PC-9 (cell line): ENCODE measurements at regions of chr12 and their contacts with region 1.

Region 1: DNA sequence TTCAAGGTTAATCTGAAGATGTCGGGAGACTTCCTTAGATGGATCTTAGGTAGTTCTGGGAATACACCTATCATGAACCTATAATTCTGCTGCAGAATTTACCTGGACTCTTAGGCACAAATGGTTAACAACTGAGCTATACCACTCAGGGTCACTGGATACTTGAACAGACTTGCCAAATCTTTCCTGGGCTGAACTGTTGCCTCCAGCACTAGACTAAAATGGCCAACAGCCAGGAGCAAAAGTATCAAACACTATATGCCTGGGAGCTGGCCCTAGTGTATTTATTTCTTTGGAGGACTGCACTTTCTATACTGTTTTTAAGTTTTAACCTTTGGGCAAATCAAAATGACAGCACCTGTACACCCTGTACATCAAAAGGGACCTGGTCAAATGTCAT is 252.8 kb downstream of the TMEM117 start:
- DNase-seq: no peak
- H3K4me3 ChIP-seq: no peak overlapping the region
- H3K27ac ChIP-seq: no peak overlapping the region
- H3K4me1 ChIP-seq: no peaks in the 10 kb centered on the region
- H3K27me3 ChIP-seq: no peaks in the 10 kb centered on the region
- CTCF ChIP-seq: no peak

Region 2: DNA sequence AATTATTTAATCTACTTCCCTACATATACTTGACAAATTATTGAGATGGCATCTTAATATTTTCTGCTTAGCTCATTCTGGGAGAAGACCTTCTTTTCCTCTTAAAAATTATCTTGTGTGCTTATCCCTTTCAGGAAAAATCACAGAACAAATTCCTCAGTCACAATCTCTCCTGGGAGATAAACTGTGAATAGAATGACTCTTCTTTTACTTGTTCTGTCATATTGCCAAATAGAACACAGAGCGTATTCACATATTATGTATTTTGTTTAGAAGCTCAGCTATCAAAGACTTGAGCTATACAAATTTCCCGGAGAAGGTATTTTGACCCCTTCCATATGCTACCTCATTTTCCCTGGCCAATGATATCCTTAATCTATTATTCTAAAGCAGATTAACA is 106.1 kb before region 1 on chr12:
- CTCF ChIA-PET with region 1: no interaction called
- POLR2A ChIA-PET with region 1: no interaction called
- intact Hi-C with region 1: no loop called
- DNase-seq: no peak
- H3K4me3 ChIP-seq: no peak overlapping the region
- H3K27ac ChIP-seq: no peak overlapping the region
- H3K4me1 ChIP-seq: no peaks in the 10 kb centered on the region
- H3K27me3 ChIP-seq: no peaks in the 10 kb centered on the region
- CTCF ChIP-seq: no peak

Region 3: GRCh38 chr12:44015335-44015941 is 73.2 kb before region 1 on chr12:
- CTCF ChIA-PET with region 1: no interaction called
- POLR2A ChIA-PET with region 1: no interaction called
- intact Hi-C with region 1: no loop called
- DNase-seq: no peak
- H3K4me3 ChIP-seq: no peak overlapping the region
- H3K27ac ChIP-seq: no peak overlapping the region
- H3K4me1 ChIP-seq: no peaks in the 10 kb centered on the region
- H3K27me3 ChIP-seq: no peaks in the 10 kb centered on the region
- CTCF ChIP-seq: peak; percentile 78

Region 4: DNA sequence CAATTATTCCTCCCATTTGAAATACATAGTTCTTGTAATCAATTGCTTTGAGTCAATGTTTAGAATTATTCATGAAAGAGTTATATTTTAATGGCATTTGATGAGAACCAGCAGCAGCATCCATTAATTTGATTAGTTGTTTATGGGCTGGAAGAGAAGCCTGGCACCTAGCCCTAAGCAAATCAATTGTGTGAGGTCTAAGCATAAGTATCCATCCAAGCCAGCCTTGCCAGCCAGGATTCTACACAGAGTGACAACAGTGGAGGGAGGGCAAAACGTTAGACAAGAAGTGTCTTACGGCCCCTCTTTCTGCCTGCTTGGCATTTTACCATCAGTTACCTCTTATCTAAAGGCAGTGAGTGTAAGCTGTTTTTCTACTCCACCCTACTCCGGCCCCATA is 309.0 kb after region 1 on chr12:
- CTCF ChIA-PET with region 1: no interaction called
- POLR2A ChIA-PET with region 1: interaction called, 10 read pairs
- intact Hi-C with region 1: no loop called
- DNase-seq: no peak
- H3K4me3 ChIP-seq: no peak overlapping the region
- H3K27ac ChIP-seq: no peak overlapping the region
- H3K4me1 ChIP-seq: no peaks in the 10 kb centered on the region
- H3K27me3 ChIP-seq: no peaks in the 10 kb centered on the region
- CTCF ChIP-seq: no peak